Gastrocnemius medialis (tissue), 4 donors: ENCODE measurements at regions of chr18 and their contacts with region 1.

Region 1: DNA sequence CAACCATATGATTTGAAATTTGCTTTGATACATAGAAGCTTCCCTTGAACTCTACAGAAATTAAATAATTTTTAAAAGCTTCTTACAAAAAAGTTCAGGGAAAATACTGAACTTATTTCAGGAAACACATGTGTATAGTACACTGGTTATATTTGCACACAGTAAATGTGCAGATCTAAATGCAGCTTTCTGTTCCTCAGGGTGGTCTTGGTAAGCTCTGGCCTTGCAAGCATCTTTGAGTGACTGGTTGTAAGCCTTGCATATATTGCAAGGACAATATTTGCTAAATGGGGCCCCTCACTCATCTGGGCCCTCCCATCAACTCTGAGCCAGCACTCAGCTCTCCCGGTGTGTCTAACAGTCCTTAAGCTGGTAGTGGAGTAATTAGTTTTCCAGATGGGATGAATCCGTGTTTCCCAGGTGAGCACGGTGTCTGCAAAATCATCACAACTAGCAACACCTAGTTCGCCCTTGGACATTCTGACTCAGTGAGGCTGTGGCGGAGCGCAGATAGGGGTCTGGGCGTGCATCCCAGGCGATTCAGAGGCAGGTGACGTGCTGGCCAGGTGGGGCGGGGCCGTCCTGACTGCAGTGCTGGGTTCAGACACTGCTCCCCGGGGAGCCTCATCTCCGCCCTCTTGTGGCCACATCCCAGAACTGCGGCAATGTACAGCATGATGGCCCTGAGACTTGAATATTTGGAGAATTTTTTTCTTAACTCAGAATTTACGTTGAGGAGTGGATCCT is 149.6 kb downstream of the MBP start:
- DNase-seq: peak; percentile 37 to 73
- ATAC-seq: peak; percentile 66 to 73
- H3K4me3 ChIP-seq: no peak overlapping the region
- H3K27ac ChIP-seq: no peak overlapping the region
- H3K4me1 ChIP-seq: peaks cover under 1 to 2% of the 10 kb centered on the region in 2 donors
- H3K27me3 ChIP-seq: no peaks in the 10 kb centered on the region
- CTCF ChIP-seq: peak; percentile 73 to 90 (median 86)
- POLR2A ChIP-seq: no peak

Region 2: DNA sequence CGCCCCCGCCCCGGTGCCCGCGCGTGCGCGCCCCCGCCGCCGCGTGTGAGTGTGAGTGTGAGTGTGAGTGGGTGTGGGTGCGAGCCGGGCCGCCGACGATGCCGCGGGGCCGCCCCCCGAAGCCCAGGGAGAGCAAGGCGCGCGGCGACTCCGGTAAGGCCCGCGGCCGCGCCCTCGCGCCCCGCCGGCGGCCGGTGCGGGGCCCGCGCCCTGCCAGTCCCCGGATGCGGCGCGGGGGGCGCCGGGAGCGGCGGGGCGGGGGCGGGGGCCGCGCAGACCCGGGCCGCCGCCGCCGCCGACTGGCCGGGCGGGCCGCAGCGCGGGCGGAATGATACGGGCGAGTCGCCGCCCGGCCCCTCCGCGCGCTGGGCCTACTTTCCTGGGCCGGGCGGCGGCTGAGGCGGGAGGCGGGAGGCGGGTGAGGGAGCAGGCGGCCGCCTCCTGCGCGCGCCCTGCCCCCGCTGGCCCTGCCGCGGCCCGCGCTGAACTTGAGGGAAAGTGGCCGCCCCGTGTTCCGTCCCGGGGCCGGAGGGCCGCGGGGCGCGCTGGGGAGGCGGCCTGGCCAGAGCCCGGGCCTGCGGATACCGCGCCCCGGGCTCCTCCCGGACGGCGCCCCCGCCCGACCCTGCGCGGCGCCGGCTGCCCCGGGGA is 160.4 kb before region 1 on chr18 and contains the start of gene ZNF236:
- in situ Hi-C with region 1: loop called in 2 of 4 experiments (anchors 10 to 25 kb)
- intact Hi-C with region 1: no loop called
- DNase-seq: peak; percentile 47 to 60
- ATAC-seq: peak; percentile 73 to 78
- H3K4me3 ChIP-seq: peak within 1 kb of the TSS; percentile 77 to 97 (median 86)
- H3K27ac ChIP-seq: peak within 1 kb of the TSS; percentile 89 to 100 (median 94)
- H3K4me1 ChIP-seq: peaks cover 14 to 20% of the 10 kb centered on the region in 2 donors
- H3K27me3 ChIP-seq: no peaks in the 10 kb centered on the region
- CTCF ChIP-seq: no peak
- POLR2A ChIP-seq: peak; percentile 74 to 76
- total RNA-seq, gene ZNF236: 6.2 to 7.1 (median 6.5) TPM

Region 3: GRCh38 chr18:76922107-76922506 is 60.9 kb before region 1 on chr18:
- in situ Hi-C with region 1: loop called in 1 of 4 experiments (anchors 10 kb)
- intact Hi-C with region 1: loop called (anchors 2 kb)
- DNase-seq: peak in 1 of 2 donors; percentile 30
- ATAC-seq: peak; percentile 58 to 82
- H3K4me3 ChIP-seq: no peak overlapping the region
- H3K27ac ChIP-seq: no peak overlapping the region
- H3K4me1 ChIP-seq: peaks cover 0 to 4% of the 10 kb centered on the region in 2 donors
- H3K27me3 ChIP-seq: no peaks in the 10 kb centered on the region
- CTCF ChIP-seq: peak in 4 of 5 experiments; percentile 36 to 39 (median 37)
- POLR2A ChIP-seq: no peak